ENCODE measurements at regions of chr1 and their contacts with region 1.

Region 1: DNA sequence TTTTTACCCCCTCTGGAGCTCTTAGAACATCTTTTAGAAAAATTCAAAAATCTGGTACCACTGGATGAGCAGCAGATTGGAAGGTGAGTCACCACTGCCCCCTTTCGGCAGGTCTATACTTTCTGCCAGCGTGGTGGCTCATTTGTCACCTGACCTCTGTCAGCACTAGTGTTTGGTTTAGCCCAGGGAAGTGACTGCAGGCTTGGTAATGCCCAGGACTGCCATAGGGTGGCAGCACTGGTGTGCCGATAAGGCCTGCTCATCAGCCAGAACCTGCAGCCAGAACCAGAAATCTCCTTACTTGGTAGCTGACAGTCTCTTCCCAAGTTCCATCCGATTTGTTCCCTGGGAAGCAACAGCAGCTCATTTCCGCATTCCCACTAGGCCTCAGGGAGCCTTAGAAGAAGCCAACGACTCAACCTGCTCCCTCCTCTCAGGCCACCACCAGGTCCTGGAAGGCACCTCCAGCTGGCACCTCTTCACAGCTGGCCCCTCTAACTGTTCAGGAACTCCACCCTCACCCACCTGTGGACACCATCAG is 6.8 kb downstream of the SMIM12 start:
- DNase-seq: peak; percentile 91
- H3K4me3 ChIP-seq: peak overlapping the region in 1 of 2 experiments; percentile 6; a peak in 1 of 4 replicates
- H3K27ac ChIP-seq: peak overlapping the region in 1 of 2 experiments; percentile 14; a peak in 2 of 4 replicates
- H3K4me1 ChIP-seq: peaks cover 0 to 17% of the 10 kb centered on the region in 2 experiments; a peak in 1 of 4 replicates
- H3K27me3 ChIP-seq: no peaks in the 10 kb centered on the region
- CTCF ChIP-seq: peak; percentile 99
- EP300 ChIP-seq: 0 out of 4 replicates have a peak, but pooled peaks of 1 of the 2 experiments have one; percentile 6
- RAD21 ChIP-seq: peak; percentile 89

Region 2: GRCh38 chr1:33886496-33886895 is 966.3 kb before region 1 on chr1:
- CTCF ChIA-PET with region 1: no interaction called
- POLR2A ChIA-PET with region 1: no interaction called
- DNase-seq: no peak
- H3K4me3 ChIP-seq: no peak overlapping the region
- H3K27ac ChIP-seq: no peak overlapping the region
- H3K4me1 ChIP-seq: peaks cover 0 to 6% of the 10 kb centered on the region in 2 experiments; a peak in 2 of 4 replicates
- H3K27me3 ChIP-seq: no peaks in the 10 kb centered on the region
- CTCF ChIP-seq: no peak
- EP300 ChIP-seq: no peak
- RAD21 ChIP-seq: no peak

Region 3: DNA sequence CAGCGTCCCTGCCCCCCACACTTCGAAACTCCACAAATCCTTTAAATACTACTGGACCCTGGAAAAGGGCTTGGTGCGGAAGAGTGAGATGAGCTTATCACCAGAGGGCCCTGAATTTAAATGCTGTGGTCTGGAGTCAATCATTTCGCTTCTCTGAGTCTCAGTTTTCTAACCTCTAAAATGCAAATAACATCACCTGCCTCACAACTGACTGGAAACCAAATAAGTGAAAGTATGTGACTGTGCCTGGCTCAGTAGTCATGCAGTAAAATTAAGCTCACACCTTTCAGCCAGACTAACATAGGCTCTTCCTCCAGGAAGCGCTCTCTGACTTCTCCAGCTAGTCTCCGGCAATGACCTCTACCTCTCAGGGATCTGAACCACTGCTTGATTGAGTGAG is 55.8 kb before region 1 on chr1:
- CTCF ChIA-PET with region 1: interaction called, 170 read pairs
- POLR2A ChIA-PET with region 1: no interaction called
- DNase-seq: no peak
- H3K4me3 ChIP-seq: no peak overlapping the region
- H3K27ac ChIP-seq: no peak overlapping the region
- H3K4me1 ChIP-seq: no peaks in the 10 kb centered on the region
- H3K27me3 ChIP-seq: no peaks in the 10 kb centered on the region
- CTCF ChIP-seq: no peak
- EP300 ChIP-seq: no peak
- RAD21 ChIP-seq: no peak

Region 4: DNA sequence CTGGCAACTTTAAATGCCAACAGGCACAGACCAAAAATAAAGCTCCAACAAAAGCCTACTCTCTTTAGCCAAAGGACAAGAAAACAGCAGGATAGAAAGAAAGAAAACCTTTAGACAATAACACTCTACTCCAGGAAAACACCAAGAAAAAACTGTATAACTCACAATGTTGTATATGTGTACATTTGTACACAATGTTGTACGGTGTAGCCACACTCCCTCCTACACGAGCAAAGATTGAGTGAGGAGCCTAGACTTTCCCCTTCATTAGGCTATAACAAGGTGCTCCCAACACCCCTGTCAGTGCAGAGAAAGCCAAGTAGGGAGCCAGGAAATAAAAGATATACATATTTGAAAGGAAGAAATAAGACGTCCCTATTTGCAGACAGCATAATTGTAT is 36.0 kb before region 1 on chr1:
- CTCF ChIA-PET with region 1: interaction called, 13 read pairs
- POLR2A ChIA-PET with region 1: no interaction called
- DNase-seq: no peak
- H3K4me3 ChIP-seq: no peak overlapping the region
- H3K27ac ChIP-seq: no peak overlapping the region
- H3K4me1 ChIP-seq: no peaks in the 10 kb centered on the region
- H3K27me3 ChIP-seq: no peaks in the 10 kb centered on the region
- CTCF ChIP-seq: no peak
- EP300 ChIP-seq: no peak
- RAD21 ChIP-seq: no peak

Region 5: DNA sequence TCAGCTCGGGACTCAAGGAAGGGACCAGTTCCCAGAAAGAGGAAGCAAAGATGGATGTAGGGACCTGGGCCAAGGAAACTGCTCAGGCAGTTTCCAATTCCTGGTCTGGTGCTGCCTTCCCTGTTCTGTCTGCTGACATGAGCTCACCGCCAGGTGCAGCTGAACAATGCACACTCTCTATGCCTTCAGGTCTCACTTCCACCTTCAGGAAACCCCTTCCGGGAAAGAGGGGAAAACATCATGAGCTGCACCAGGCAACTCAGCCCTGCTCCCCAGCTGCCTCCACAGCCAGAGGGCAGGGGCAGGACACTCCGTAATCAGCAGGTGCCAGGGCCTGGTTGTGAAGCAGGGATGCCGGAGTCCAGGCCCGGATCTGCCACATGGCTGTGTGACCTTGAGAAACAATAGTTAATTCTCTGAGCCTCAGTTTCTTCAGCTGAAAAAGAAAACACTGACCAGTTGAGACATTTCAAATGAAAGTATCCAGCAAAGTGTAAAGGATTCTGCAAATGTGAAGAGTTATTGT is 21.0 kb before region 1 on chr1:
- CTCF ChIA-PET with region 1: interaction called, 55 read pairs
- POLR2A ChIA-PET with region 1: interaction called, 3 read pairs
- DNase-seq: peak; percentile 54
- H3K4me3 ChIP-seq: no peak overlapping the region
- H3K27ac ChIP-seq: 0 out of 4 replicates have a peak overlapping the region, but pooled peaks of 1 of the 2 experiments have one; percentile 35
- H3K4me1 ChIP-seq: peaks cover 0 to 26% of the 10 kb centered on the region in 2 experiments; a peak in 1 of 4 replicates
- H3K27me3 ChIP-seq: no peaks in the 10 kb centered on the region
- CTCF ChIP-seq: no peak
- EP300 ChIP-seq: peak in 1 of 2 experiments; percentile 11; a peak in 1 of 4 replicates
- RAD21 ChIP-seq: no peak

Region 6: DNA sequence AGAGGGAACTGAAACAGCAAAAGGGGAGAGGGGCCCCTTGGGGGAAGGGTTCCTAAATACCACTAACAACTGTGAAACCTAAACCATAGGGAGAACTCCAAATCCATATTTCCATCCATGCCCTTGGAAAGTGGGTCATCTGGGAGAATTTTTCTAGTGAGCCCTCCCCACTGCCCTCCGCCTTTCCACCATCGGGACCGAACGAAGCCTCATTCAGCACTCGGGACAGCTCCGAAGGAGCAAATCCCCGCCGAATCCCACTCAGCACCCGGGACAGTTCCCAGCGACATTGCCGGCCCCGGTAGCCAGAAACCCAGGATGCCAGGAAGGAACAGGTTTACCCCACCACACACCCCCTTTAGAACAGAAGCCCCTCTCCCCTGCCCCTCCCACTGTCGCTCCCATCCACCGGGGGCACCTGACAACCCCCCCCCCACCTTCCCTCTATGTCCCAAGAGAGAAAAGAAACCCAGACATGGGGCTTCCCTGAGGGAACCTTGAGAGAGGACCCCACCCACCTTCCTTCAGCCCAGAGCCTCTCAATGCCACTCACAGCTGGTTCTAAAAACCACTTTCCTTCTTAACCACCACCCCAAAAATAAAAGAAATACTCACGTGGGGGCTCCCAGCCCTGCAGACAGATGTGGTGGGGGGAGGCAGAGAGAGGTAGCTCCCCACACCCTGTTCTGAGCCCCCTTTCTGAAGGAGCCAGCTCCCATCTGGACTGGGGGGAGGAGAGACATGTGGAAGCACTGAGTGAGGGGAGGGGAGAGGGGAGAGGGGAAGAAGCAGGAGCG is 72.2 kb after region 1 on chr1:
- CTCF ChIA-PET with region 1: interaction called, 14 read pairs
- POLR2A ChIA-PET with region 1: no interaction called
- DNase-seq: no peak
- H3K4me3 ChIP-seq: no peak overlapping the region
- H3K27ac ChIP-seq: no peak overlapping the region
- H3K4me1 ChIP-seq: peaks cover 0 to 3% of the 10 kb centered on the region in 2 experiments; a peak in 1 of 4 replicates
- H3K27me3 ChIP-seq: peaks cover 15% of the 10 kb centered on the region
- CTCF ChIP-seq: no peak
- EP300 ChIP-seq: no peak
- RAD21 ChIP-seq: no peak

Region 7: GRCh38 chr1:35016406-35016805 is 163.7 kb after region 1 on chr1:
- CTCF ChIA-PET with region 1: interaction called, 11 read pairs
- POLR2A ChIA-PET with region 1: no interaction called
- DNase-seq: no peak
- H3K4me3 ChIP-seq: no peak overlapping the region
- H3K27ac ChIP-seq: no peak overlapping the region
- H3K4me1 ChIP-seq: no peaks in the 10 kb centered on the region
- H3K27me3 ChIP-seq: no peaks in the 10 kb centered on the region
- CTCF ChIP-seq: no peak
- EP300 ChIP-seq: no peak
- RAD21 ChIP-seq: no peak

Measured in SK-N-SH (cell line).